Sigmoid colon (tissue), 7 donors: ENCODE measurements at regions of chr10 and their contacts with region 1.

Region 1: GRCh38 chr10:76397181-76397881 is 965.9 kb downstream of the LRMDA start:
- DNase-seq: peak; percentile 94
- H3K4me3 ChIP-seq: peak overlapping the region in 1 of 4 donors; percentile 2
- H3K27ac ChIP-seq: peak overlapping the region; percentile 75 to 83 (median 76)
- H3K4me1 ChIP-seq: peaks cover 0 to 61% (median 32%) of the 10 kb centered on the region in 4 donors
- H3K27me3 ChIP-seq: no peaks in the 10 kb centered on the region
- CTCF ChIP-seq: no peak
- EP300 ChIP-seq: peak in 3 of 4 donors; percentile 10 to 46 (median 39)
- POLR2A ChIP-seq: no peak

Region 2: DNA sequence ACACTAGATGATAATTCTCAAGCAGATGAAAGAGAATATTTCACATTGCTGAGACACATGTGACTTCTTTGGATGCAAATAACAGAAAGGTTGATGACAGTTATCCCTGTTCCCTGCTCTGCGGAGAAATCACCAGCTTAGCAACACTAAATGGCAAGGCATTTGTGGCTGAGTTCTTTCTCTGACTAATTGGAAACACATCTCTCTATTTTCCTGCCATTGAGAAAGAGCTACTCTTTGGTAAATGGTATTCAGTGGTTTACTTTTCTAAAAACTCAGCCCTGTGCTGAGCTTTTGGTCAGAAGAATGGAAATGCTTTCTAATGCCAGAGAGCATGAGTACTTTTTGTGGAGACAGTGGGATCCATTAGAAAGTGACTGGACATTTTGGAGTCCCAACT is 194.6 kb before region 1 on chr10:
- intact Hi-C with region 1: no loop called
- DNase-seq: no peak
- H3K4me3 ChIP-seq: no peak overlapping the region
- H3K27ac ChIP-seq: no peak overlapping the region
- H3K4me1 ChIP-seq: no peaks in the 10 kb centered on the region
- H3K27me3 ChIP-seq: no peaks in the 10 kb centered on the region
- CTCF ChIP-seq: no peak
- EP300 ChIP-seq: no peak
- POLR2A ChIP-seq: no peak

Region 3: GRCh38 chr10:76282061-76283035 is 115.0 kb before region 1 on chr10:
- intact Hi-C with region 1: loop called (anchors 10 kb)
- DNase-seq: peak; percentile 84
- H3K4me3 ChIP-seq: no peak overlapping the region
- H3K27ac ChIP-seq: peak overlapping the region in 3 of 4 donors; percentile 44 to 59 (median 59)
- H3K4me1 ChIP-seq: peaks cover 0 to 55% (median 42%) of the 10 kb centered on the region in 4 donors
- H3K27me3 ChIP-seq: no peaks in the 10 kb centered on the region
- CTCF ChIP-seq: no peak
- EP300 ChIP-seq: peak in 2 of 4 donors; percentile 12 to 30
- POLR2A ChIP-seq: no peak

Region 4: DNA sequence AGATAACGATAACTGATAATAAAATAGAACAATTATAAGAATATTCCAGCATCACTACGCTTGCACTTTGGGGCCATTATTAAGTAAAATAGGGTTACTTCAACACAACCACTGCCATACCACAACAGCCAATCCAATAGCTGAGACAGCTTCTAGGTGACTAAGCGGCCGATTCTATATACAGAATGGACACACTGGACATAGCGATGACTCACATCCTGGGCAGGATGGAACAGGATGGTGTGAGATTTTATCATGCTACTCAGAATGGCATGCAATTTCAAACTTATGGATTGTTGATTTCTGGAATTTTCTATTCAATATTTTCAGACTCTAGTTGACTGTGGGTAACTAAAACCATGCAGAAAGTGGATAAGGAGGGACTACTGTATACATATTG is 45.0 kb before region 1 on chr10:
- intact Hi-C with region 1: loop called (anchors 2 kb)
- DNase-seq: no peak
- H3K4me3 ChIP-seq: no peak overlapping the region
- H3K27ac ChIP-seq: peak overlapping the region in 3 of 4 donors; percentile 51 to 69 (median 57)
- H3K4me1 ChIP-seq: peaks cover 0 to 53% (median 26%) of the 10 kb centered on the region in 4 donors
- H3K27me3 ChIP-seq: no peaks in the 10 kb centered on the region
- CTCF ChIP-seq: no peak
- EP300 ChIP-seq: no peak
- POLR2A ChIP-seq: no peak

Region 5: DNA sequence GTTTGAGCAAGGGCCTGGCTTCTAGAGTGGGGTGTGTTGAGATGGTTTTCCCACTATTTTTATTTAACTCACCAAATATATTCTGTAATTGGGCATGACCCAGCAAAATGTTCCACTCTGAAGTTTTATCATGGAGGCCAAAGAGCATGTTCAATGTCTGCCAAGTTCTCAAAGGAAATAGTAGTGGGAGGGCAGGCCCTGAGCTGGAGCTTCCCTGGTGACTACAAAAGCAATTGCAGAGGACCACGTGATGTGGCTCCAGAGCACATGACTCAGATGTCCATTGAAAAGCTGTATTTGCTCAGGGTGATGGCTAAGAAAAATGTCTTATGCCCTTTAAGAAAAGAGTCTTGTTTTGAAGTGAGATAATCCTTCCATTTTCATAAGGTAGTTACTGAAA is 58.9 kb after region 1 on chr10:
- intact Hi-C with region 1: loop called (anchors 5 kb)
- DNase-seq: no peak
- H3K4me3 ChIP-seq: no peak overlapping the region
- H3K27ac ChIP-seq: peak overlapping the region in 2 of 4 donors; percentile 20 to 53
- H3K4me1 ChIP-seq: peaks cover 0 to 44% (median 38%) of the 10 kb centered on the region in 4 donors
- H3K27me3 ChIP-seq: no peaks in the 10 kb centered on the region
- CTCF ChIP-seq: no peak
- EP300 ChIP-seq: no peak
- POLR2A ChIP-seq: no peak

Region 6: DNA sequence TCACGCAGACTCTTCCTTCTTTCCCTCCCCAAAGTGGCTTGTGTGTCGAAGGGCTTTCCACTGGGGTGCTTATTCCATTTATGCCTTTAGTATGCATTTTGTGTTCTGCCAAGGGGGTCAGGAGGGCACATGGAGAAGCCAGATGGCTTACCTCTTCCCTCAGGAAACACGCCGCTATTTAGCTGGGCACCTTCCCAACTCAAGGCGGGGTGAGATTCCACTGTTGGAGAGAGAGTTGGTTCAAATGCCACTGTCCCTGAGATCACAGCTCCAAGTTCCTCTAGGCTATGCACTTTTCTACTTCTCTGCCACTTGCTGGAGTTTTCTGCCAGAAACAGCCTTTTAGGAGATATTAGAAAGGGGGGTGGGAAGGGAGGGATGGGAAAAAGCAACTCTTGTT is 125.9 kb after region 1 on chr10:
- intact Hi-C with region 1: loop called (anchors 2 kb)
- DNase-seq: peak; percentile 78
- H3K4me3 ChIP-seq: no peak overlapping the region
- H3K27ac ChIP-seq: peak overlapping the region; percentile 60 to 80 (median 78)
- H3K4me1 ChIP-seq: peaks cover 0 to 30% (median 25%) of the 10 kb centered on the region in 4 donors
- H3K27me3 ChIP-seq: no peaks in the 10 kb centered on the region
- CTCF ChIP-seq: no peak
- EP300 ChIP-seq: no peak
- POLR2A ChIP-seq: no peak

Region 7: DNA sequence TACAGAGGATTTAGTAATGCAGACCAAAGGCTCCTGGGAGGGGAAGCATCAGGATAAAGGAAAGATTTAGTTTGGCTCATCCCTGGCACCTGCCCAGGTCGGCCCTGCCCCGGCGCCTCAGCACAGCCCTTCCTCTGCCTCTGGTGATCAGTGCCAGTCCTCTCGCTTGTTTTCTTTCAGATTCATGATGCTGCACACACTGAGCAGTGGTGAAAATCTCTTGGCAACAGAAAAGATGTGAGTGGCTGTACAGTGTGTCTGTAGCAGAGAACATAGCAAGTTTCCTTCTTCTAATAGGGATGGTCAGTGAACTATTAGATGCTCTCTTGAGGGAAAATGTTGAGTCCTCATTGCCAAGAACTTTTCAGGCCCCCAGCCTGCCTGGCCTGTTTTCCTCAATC is 246.2 kb after region 1 on chr10:
- intact Hi-C with region 1: loop called (anchors 2 kb)
- DNase-seq: peak; percentile 94
- H3K4me3 ChIP-seq: no peak overlapping the region
- H3K27ac ChIP-seq: peak overlapping the region in 3 of 4 donors; percentile 80 to 81 (median 81)
- H3K4me1 ChIP-seq: peaks cover 0 to 91% (median 60%) of the 10 kb centered on the region in 4 donors
- H3K27me3 ChIP-seq: no peaks in the 10 kb centered on the region
- CTCF ChIP-seq: no peak
- EP300 ChIP-seq: peak in 1 of 4 donors; percentile 15
- POLR2A ChIP-seq: no peak

Region 8: GRCh38 chr10:76882245-76882644 is 484.9 kb after region 1 on chr10:
- intact Hi-C with region 1: loop called (anchors 5 kb)
- DNase-seq: no peak
- H3K4me3 ChIP-seq: no peak overlapping the region
- H3K27ac ChIP-seq: no peak overlapping the region
- H3K4me1 ChIP-seq: peaks cover 0 to 49% (median 30%) of the 10 kb centered on the region in 4 donors
- H3K27me3 ChIP-seq: no peaks in the 10 kb centered on the region
- CTCF ChIP-seq: no peak
- EP300 ChIP-seq: no peak
- POLR2A ChIP-seq: no peak